ENCODE measurements at regions of chr7 and their contacts with region 1.

Region 1: GRCh38 chr7:34445653-34446052 is 212.4 kb upstream of the NPSR1 start:
- DNase-seq: no peak
- ATAC-seq: no peak
- H3K4me3 ChIP-seq: no peak overlapping the region
- H3K27ac ChIP-seq: no peak overlapping the region
- H3K4me1 ChIP-seq: no peaks in the 10 kb centered on the region
- H3K27me3 ChIP-seq: no peaks in the 10 kb centered on the region
- CTCF ChIP-seq: no peak

Region 2: GRCh38 chr7:34385390-34385789 is 60.3 kb before region 1 on chr7:
- CTCF ChIA-PET with region 1: no interaction called
- POLR2A ChIA-PET with region 1: no interaction called
- in situ Hi-C with region 1: no loop called
- intact Hi-C with region 1: loop called (anchors 10 kb)
- DNase-seq: no peak
- ATAC-seq: no peak
- H3K4me3 ChIP-seq: no peak overlapping the region
- H3K27ac ChIP-seq: no peak overlapping the region
- H3K4me1 ChIP-seq: no peaks in the 10 kb centered on the region
- H3K27me3 ChIP-seq: no peaks in the 10 kb centered on the region
- CTCF ChIP-seq: no peak